GM12878 (cell line): ENCODE measurements at regions of chr12 and their contacts with region 1.

Region 1: GRCh38 chr12:76031537-76032073 is at the start of gene PHLDA1:
- DNase-seq: peak; percentile 79
- ATAC-seq: peak; percentile 84
- H3K4me3 ChIP-seq: peak within 1 kb of the TSS; percentile 85
- H3K27ac ChIP-seq: peak within 1 kb of the TSS; percentile 75
- H3K4me1 ChIP-seq: peaks cover 17% of the 10 kb centered on the region
- H3K27me3 ChIP-seq: no peaks in the 10 kb centered on the region; a peak in 1 of 4 replicates
- CTCF ChIP-seq: peak; percentile 57 to 89 (median 72)
- EP300 ChIP-seq: peak in 1 of 2 experiments; percentile 60; a peak in 1 of 4 replicates
- POLR2A ChIP-seq: peak; percentile 94
- RAD21 ChIP-seq: peak; percentile 81
- polyA plus RNA-seq, gene PHLDA1: 0.66 to 0.87 TPM

Region 2: GRCh38 chr12:75553398-75553797 is 478.2 kb before region 1 on chr12:
- CTCF ChIA-PET with region 1: interaction called, 34 read pairs
- POLR2A ChIA-PET with region 1: no interaction called
- RAD21 ChIA-PET with region 1: interaction called, 89 read pairs
- SMC1A ChIA-PET with region 1: interaction called, 23 read pairs
- in situ Hi-C with region 1: no loop called
- intact Hi-C with region 1: no loop called
- DNase-seq: no peak
- ATAC-seq: peak; percentile 44
- H3K4me3 ChIP-seq: no peak overlapping the region
- H3K27ac ChIP-seq: no peak overlapping the region
- H3K4me1 ChIP-seq: no peaks in the 10 kb centered on the region
- H3K27me3 ChIP-seq: no peaks in the 10 kb centered on the region
- CTCF ChIP-seq: no peak
- EP300 ChIP-seq: no peak
- POLR2A ChIP-seq: no peak
- RAD21 ChIP-seq: no peak

Region 3: GRCh38 chr12:75759842-75760572 is 271.6 kb before region 1 on chr12:
- CTCF ChIA-PET with region 1: interaction called, 3 read pairs
- POLR2A ChIA-PET with region 1: no interaction called
- RAD21 ChIA-PET with region 1: interaction called, 12 read pairs
- SMC1A ChIA-PET with region 1: no interaction called
- in situ Hi-C with region 1: no loop called
- intact Hi-C with region 1: no loop called
- DNase-seq: no peak
- ATAC-seq: peak; percentile 76
- H3K4me3 ChIP-seq: no peak overlapping the region
- H3K27ac ChIP-seq: no peak overlapping the region
- H3K4me1 ChIP-seq: no peaks in the 10 kb centered on the region
- H3K27me3 ChIP-seq: no peaks in the 10 kb centered on the region
- CTCF ChIP-seq: no peak
- EP300 ChIP-seq: no peak
- POLR2A ChIP-seq: no peak
- RAD21 ChIP-seq: no peak

Region 4: DNA sequence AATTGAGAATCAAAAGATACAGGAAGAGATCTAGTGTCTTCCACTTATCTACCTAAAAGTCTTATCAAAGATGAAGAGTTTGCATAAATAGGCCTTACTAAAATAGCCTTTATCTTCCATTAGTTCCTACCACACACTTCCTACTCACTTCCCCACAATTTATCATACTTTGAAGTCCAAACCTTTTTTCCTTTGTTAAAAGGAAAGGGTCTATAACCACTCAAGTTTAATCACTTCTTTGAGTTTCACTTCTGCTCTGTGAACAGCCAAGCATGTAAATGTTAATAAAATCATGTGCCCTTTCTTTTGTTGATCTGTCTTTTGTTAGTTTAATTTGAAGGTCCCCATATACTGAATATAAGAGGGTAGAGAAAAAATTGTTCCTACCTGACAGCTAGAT is 114.5 kb before region 1 on chr12:
- CTCF ChIA-PET with region 1: interaction called, 5 read pairs
- POLR2A ChIA-PET with region 1: interaction called, 4 read pairs
- RAD21 ChIA-PET with region 1: interaction called, 45 read pairs
- SMC1A ChIA-PET with region 1: interaction called, 25 read pairs
- in situ Hi-C with region 1: no loop called
- intact Hi-C with region 1: no loop called
- DNase-seq: peak; percentile 17
- ATAC-seq: peak; percentile 93
- H3K4me3 ChIP-seq: no peak overlapping the region
- H3K27ac ChIP-seq: no peak overlapping the region
- H3K4me1 ChIP-seq: no peaks in the 10 kb centered on the region
- H3K27me3 ChIP-seq: no peaks in the 10 kb centered on the region
- CTCF ChIP-seq: no peak
- EP300 ChIP-seq: peak; percentile 24 to 70; a peak in 3 of 4 replicates
- POLR2A ChIP-seq: no peak
- RAD21 ChIP-seq: no peak

Region 5: DNA sequence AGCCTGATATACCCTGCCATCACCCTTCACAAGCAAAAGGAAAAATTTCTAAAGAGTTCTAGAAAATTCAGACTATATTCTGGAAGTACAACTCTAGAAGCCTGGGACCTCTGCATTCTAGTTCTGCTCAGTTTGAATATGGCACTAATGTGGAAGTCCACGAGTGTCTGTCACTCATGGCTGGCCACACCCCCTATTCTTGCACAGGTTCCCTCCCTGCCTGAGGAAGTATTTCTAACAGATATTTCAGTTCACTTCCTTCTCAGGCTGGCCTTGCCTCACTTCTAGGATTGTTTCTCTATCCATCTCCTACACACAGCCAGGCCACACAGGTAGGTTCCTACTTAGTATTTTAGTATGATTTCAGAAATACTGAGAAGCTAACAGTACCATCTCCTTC is 67.5 kb before region 1 on chr12:
- CTCF ChIA-PET with region 1: interaction called, 8 read pairs
- POLR2A ChIA-PET with region 1: interaction called, 4 read pairs
- RAD21 ChIA-PET with region 1: interaction called, 20 read pairs
- SMC1A ChIA-PET with region 1: interaction called, 4 read pairs
- in situ Hi-C with region 1: no loop called
- intact Hi-C with region 1: no loop called
- DNase-seq: no peak
- ATAC-seq: peak; percentile 74
- H3K4me3 ChIP-seq: no peak overlapping the region
- H3K27ac ChIP-seq: no peak overlapping the region
- H3K4me1 ChIP-seq: no peaks in the 10 kb centered on the region
- H3K27me3 ChIP-seq: no peaks in the 10 kb centered on the region
- CTCF ChIP-seq: no peak
- EP300 ChIP-seq: no peak
- POLR2A ChIP-seq: no peak
- RAD21 ChIP-seq: no peak

Region 6: DNA sequence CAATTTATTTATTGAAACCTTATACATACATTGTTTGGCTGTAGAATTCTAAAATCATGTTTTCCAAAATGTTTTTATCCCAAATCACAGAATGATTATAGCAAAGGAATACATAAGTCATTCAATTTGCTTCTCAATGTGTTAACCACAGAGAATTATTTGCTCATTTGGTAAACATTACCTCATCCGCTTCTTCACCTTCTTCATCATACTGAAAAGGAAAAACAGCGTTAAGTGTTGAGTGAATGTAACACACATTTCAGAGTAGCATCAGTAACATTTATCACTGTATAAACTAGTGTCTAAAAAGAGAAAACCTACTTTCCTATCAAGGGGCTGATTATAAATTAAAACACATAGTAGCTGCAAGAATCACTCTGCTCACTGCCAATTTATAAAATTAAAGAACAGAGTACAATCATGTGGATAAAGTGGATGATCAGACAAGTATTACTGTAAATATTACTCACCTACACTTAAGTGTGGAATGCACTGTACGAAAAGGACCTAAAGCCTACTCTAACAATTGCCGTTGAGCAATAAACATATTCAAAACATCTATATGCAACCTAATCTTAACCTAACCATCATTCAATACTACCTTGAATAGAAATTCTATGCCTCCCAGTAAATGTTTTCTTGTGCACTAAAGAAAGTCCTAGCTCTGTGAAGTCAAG is 18.1 kb after region 1 on chr12:
- CTCF ChIA-PET with region 1: interaction called, 8 read pairs
- POLR2A ChIA-PET with region 1: interaction called, 3 read pairs
- RAD21 ChIA-PET with region 1: interaction called, 5 read pairs
- SMC1A ChIA-PET with region 1: interaction called, 12 read pairs
- in situ Hi-C with region 1: no loop called
- intact Hi-C with region 1: no loop called
- DNase-seq: no peak
- ATAC-seq: no peak
- H3K4me3 ChIP-seq: no peak overlapping the region
- H3K27ac ChIP-seq: no peak overlapping the region
- H3K4me1 ChIP-seq: no peaks in the 10 kb centered on the region
- H3K27me3 ChIP-seq: no peaks in the 10 kb centered on the region
- CTCF ChIP-seq: no peak
- EP300 ChIP-seq: no peak
- POLR2A ChIP-seq: no peak
- RAD21 ChIP-seq: no peak